Pancreas (tissue), 10 donors: ENCODE measurements at regions of chr9 and their contacts with region 1.

Region 1: GRCh38 chr9:131728961-131729360 is 10.9 kb downstream of the RAPGEF1 start:
- DNase-seq: no peak
- ATAC-seq: peak in 3 of 4 donors; percentile 13 to 43 (median 27)
- H3K4me3 ChIP-seq: no peak overlapping the region
- H3K27ac ChIP-seq: peak overlapping the region in 2 of 4 donors; percentile 15 to 61
- H3K4me1 ChIP-seq: peaks cover 7 to 40% (median 19%) of the 10 kb centered on the region in 3 donors
- H3K27me3 ChIP-seq: no peaks in the 10 kb centered on the region
- CTCF ChIP-seq: no peak

Region 2: GRCh38 chr9:131618071-131618479 is 110.9 kb before region 1 on chr9:
- intact Hi-C with region 1: loop called in 1 of 3 experiments (anchors 10 kb)
- DNase-seq: peak in 4 of 6 donors; percentile 46 to 70 (median 61)
- ATAC-seq: peak; percentile 46 to 77 (median 70)
- H3K4me3 ChIP-seq: no peak overlapping the region
- H3K27ac ChIP-seq: no peak overlapping the region
- H3K4me1 ChIP-seq: peaks cover 0 to 9% (median 0%) of the 10 kb centered on the region in 3 donors
- H3K27me3 ChIP-seq: no peaks in the 10 kb centered on the region
- CTCF ChIP-seq: no peak

Region 3: GRCh38 chr9:131645078-131645776 is 83.7 kb before region 1 on chr9:
- intact Hi-C with region 1: no loop called
- DNase-seq: no peak
- ATAC-seq: peak in 1 of 4 donors; percentile 9
- H3K4me3 ChIP-seq: no peak overlapping the region
- H3K27ac ChIP-seq: no peak overlapping the region
- H3K4me1 ChIP-seq: no peaks in the 10 kb centered on the region
- H3K27me3 ChIP-seq: no peaks in the 10 kb centered on the region
- CTCF ChIP-seq: no peak

Region 4: DNA sequence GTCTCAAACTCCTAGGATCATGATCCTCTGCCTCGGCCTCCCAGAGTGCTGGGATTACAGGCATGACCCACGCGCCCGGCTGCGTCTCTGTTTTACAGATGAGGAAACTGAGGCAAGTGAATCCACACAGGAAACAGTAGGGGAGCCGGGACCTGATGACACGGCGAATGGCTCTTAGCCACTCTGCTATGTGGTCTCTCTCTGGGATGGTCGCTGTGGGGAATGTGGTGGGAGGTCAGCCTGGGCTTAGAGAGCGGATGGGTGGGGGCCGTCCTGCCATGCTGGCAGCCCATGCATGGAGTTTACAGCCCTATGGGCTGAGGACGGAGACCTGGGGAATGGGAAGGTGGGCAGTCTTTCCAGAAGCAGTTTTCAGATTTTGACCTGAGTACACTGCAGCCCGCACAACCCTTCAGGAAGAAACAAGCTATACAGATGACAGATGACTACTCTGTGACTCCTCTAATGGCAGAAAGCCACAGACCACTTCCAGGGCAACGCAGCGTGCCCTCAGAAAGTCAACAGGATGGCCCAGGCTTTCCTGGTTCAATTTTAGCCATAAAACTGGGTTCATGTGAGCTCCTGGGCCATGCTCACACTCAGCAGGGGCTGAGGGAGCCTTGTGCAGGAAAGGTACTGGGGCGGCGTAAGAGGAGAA is 147.0 kb after region 1 on chr9:
- intact Hi-C with region 1: no loop called
- DNase-seq: no peak
- ATAC-seq: no peak
- H3K4me3 ChIP-seq: no peak overlapping the region
- H3K27ac ChIP-seq: no peak overlapping the region
- H3K4me1 ChIP-seq: no peaks in the 10 kb centered on the region
- H3K27me3 ChIP-seq: no peaks in the 10 kb centered on the region
- CTCF ChIP-seq: no peak